ENCODE measurements at regions of chrX and their contacts with region 1.

Region 1: GRCh38 chrX:54930291-54931049 is 9.8 kb downstream of the TRO start:
- DNase-seq: peak; percentile 74 to 75
- H3K4me3 ChIP-seq: no peak overlapping the region
- H3K27ac ChIP-seq: no peak overlapping the region
- H3K4me1 ChIP-seq: no peaks in the 10 kb centered on the region
- H3K27me3 ChIP-seq: no peaks in the 10 kb centered on the region
- CTCF ChIP-seq: no peak
- POLR2A ChIP-seq: no peak

Region 2: GRCh38 chrX:54715621-54716020 is 214.8 kb before region 1 on chrX:
- intact Hi-C with region 1: no loop called
- DNase-seq: no peak
- H3K4me3 ChIP-seq: no peak overlapping the region
- H3K27ac ChIP-seq: no peak overlapping the region
- H3K4me1 ChIP-seq: no peaks in the 10 kb centered on the region
- H3K27me3 ChIP-seq: no peaks in the 10 kb centered on the region
- CTCF ChIP-seq: no peak
- POLR2A ChIP-seq: no peak

Region 3: GRCh38 chrX:55045716-55046115 is 115.2 kb after region 1 on chrX:
- intact Hi-C with region 1: loop called (anchors 10 kb)
- DNase-seq: no peak
- H3K4me3 ChIP-seq: no peak overlapping the region
- H3K27ac ChIP-seq: no peak overlapping the region
- H3K4me1 ChIP-seq: no peaks in the 10 kb centered on the region
- H3K27me3 ChIP-seq: no peaks in the 10 kb centered on the region
- CTCF ChIP-seq: no peak
- POLR2A ChIP-seq: no peak

Measured in vagina (tissue), 2 donors.